Left ventricle myocardium superior (tissue), 1 donor: ENCODE measurements at regions of chr12 and their contacts with region 1.

Region 1: GRCh38 chr12:94074980-94075928 is 73.1 kb upstream of the PLXNC1 start:
- DNase-seq: peak; percentile 74
- ATAC-seq: peak; percentile 89

Region 2: GRCh38 chr12:93925585-93926205 is 149.6 kb before region 1 on chr12:
- intact Hi-C with region 1: no loop called
- DNase-seq: no peak
- ATAC-seq: no peak

Region 3: GRCh38 chr12:93990832-93991803 is 84.1 kb before region 1 on chr12:
- intact Hi-C with region 1: loop called (anchors 10 kb)
- DNase-seq: peak; percentile 57
- ATAC-seq: peak; percentile 98